ENCODE measurements at regions of chrX and their contacts with region 1.

Region 1: GRCh38 chrX:103845165-103845653 is 13.2 kb upstream of the RAB9B start:
- DNase-seq: peak in 1 of 2 donors; percentile 67
- ATAC-seq: peak in 2 of 3 donors; percentile 58 to 69
- H3K4me3 ChIP-seq: no peak overlapping the region
- H3K4me3 Mint-ChIP-seq: no peak overlapping the region
- H3K27ac ChIP-seq: no peak overlapping the region
- H3K27ac Mint-ChIP-seq: no peak overlapping the region
- H3K4me1 ChIP-seq: no peaks in the 10 kb centered on the region
- H3K4me1 Mint-ChIP-seq: no peaks in the 10 kb centered on the region
- H3K27me3 ChIP-seq: no peaks in the 10 kb centered on the region
- H3K27me3 Mint-ChIP-seq: peaks cover 5 to 52% of the 10 kb centered on the region in 2 donors
- CTCF ChIP-seq: peak; percentile 56

Region 2: GRCh38 chrX:103941201-103941975 is 96.2 kb after region 1 on chrX:
- intact Hi-C with region 1: loop called (anchors 1 kb)
- DNase-seq: peak in 1 of 2 donors; percentile 63
- ATAC-seq: peak in 2 of 3 donors; percentile 34 to 66
- H3K4me3 ChIP-seq: no peak overlapping the region
- H3K4me3 Mint-ChIP-seq: no peak overlapping the region
- H3K27ac ChIP-seq: no peak overlapping the region
- H3K27ac Mint-ChIP-seq: no peak overlapping the region
- H3K4me1 ChIP-seq: peaks cover 7% of the 10 kb centered on the region
- H3K4me1 Mint-ChIP-seq: no peaks in the 10 kb centered on the region
- H3K27me3 ChIP-seq: no peaks in the 10 kb centered on the region
- H3K27me3 Mint-ChIP-seq: no peaks in the 10 kb centered on the region
- CTCF ChIP-seq: peak; percentile 56

Region 3: GRCh38 chrX:104136241-104137019 is 291.2 kb after region 1 on chrX:
- intact Hi-C with region 1: loop called (anchors 2 kb)
- DNase-seq: peak; percentile 33 to 84
- ATAC-seq: peak; percentile 74 to 82 (median 78)
- H3K4me3 ChIP-seq: no peak overlapping the region
- H3K4me3 Mint-ChIP-seq: no peak overlapping the region
- H3K27ac ChIP-seq: no peak overlapping the region
- H3K27ac Mint-ChIP-seq: no peak overlapping the region
- H3K4me1 ChIP-seq: peaks cover 20% of the 10 kb centered on the region
- H3K4me1 Mint-ChIP-seq: peaks cover 28 to 40% of the 10 kb centered on the region in 2 donors
- H3K27me3 ChIP-seq: no peaks in the 10 kb centered on the region
- H3K27me3 Mint-ChIP-seq: no peaks in the 10 kb centered on the region
- CTCF ChIP-seq: peak; percentile 71

Region 4: GRCh38 chrX:104270920-104271512 is 425.8 kb after region 1 on chrX:
- intact Hi-C with region 1: loop called (anchors 10 kb)
- DNase-seq: peak; percentile 13 to 38
- ATAC-seq: peak in 2 of 3 donors; percentile 36 to 53
- H3K4me3 ChIP-seq: no peak overlapping the region
- H3K4me3 Mint-ChIP-seq: peak overlapping the region; percentile 45
- H3K27ac ChIP-seq: no peak overlapping the region
- H3K27ac Mint-ChIP-seq: no peak overlapping the region
- H3K4me1 ChIP-seq: no peaks in the 10 kb centered on the region
- H3K4me1 Mint-ChIP-seq: peaks cover 0 to 6% of the 10 kb centered on the region in 2 donors
- H3K27me3 ChIP-seq: no peaks in the 10 kb centered on the region
- H3K27me3 Mint-ChIP-seq: peaks cover 13 to 18% of the 10 kb centered on the region in 2 donors
- CTCF ChIP-seq: peak; percentile 57

Measured in natural killer cell (primary cell).